A549 (cell line): ENCODE measurements at regions of chr4 and their contacts with region 1.

Region 1: GRCh38 chr4:76504613-76505465 is 69.8 kb downstream of the SHROOM3 start:
- DNase-seq: peak; percentile 33 to 39
- ATAC-seq: peak in 1 of 2 experiments; percentile 69; a peak in 3 of 6 replicates
- H3K4me3 ChIP-seq: no peak overlapping the region
- H3K27ac ChIP-seq: no peak overlapping the region
- H3K4me1 ChIP-seq: no peaks in the 10 kb centered on the region
- CTCF ChIP-seq: peak; percentile 62
- EP300 ChIP-seq: no peak
- POLR2A ChIP-seq: no peak
- RAD21 ChIP-seq: peak; percentile 61 to 66

Region 2: DNA sequence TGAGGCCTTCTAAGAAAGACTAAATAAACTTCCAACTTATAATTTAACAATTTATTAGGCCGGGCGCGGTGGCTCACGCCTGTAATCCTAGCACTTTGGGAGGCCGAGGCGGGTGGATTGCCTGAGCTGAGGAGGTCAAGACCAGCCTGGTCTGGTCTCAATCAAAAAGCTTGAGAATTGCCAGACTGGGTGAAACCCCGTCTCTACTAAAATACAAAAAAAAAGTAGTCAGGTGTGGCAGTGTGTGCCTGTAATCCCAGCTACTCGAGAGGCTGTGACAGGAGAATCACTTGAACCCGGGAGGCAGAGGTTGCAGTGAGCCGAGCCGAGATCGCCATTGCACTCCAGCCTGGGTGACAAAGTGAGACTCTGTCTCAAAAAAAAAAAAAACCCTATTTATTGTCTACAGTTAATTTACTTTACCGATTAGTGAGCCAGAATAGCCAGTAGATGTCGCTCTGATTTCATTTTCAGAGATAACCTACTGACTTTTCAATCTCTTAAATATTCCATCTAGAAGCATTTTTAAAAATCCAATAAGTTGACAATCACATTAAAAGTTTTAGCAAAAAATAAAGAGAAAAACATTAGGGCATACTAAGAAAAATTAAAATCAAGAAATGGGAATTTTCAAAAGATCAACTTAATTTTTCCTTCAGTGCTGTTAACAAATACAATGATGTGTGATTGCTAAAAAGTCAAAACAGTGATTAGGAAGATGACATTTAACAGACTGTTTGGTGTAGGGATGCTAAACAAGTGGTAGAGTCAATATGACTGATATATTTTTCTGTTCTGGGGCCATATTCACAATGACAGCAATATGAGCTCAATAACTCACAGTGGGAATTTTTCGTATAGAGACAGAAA is 74.1 kb before region 1 on chr4:
- CTCF ChIA-PET with region 1: interaction called, 76 read pairs
- POLR2A ChIA-PET with region 1: no interaction called
- DNase-seq: peak; percentile 33 to 36
- ATAC-seq: peak in 1 of 2 experiments; percentile 65; a peak in 3 of 6 replicates
- H3K4me3 ChIP-seq: no peak overlapping the region
- H3K27ac ChIP-seq: no peak overlapping the region
- H3K4me1 ChIP-seq: no peaks in the 10 kb centered on the region
- CTCF ChIP-seq: peak; percentile 72
- EP300 ChIP-seq: no peak
- POLR2A ChIP-seq: no peak
- RAD21 ChIP-seq: peak; percentile 74 to 77

Region 3: GRCh38 chr4:76476606-76477005 is 28.2 kb before region 1 on chr4:
- CTCF ChIA-PET with region 1: interaction called, 12 read pairs
- POLR2A ChIA-PET with region 1: no interaction called
- DNase-seq: no peak
- ATAC-seq: no peak
- H3K4me3 ChIP-seq: no peak overlapping the region
- H3K27ac ChIP-seq: no peak overlapping the region
- H3K4me1 ChIP-seq: no peaks in the 10 kb centered on the region
- CTCF ChIP-seq: no peak
- EP300 ChIP-seq: no peak
- POLR2A ChIP-seq: no peak
- RAD21 ChIP-seq: no peak

Region 4: GRCh38 chr4:77172336-77172735 is 667.5 kb after region 1 on chr4:
- CTCF ChIA-PET with region 1: no interaction called
- POLR2A ChIA-PET with region 1: no interaction called
- DNase-seq: no peak
- ATAC-seq: no peak
- H3K4me3 ChIP-seq: no peak overlapping the region
- H3K27ac ChIP-seq: no peak overlapping the region
- H3K4me1 ChIP-seq: no peaks in the 10 kb centered on the region
- CTCF ChIP-seq: no peak
- EP300 ChIP-seq: no peak
- POLR2A ChIP-seq: no peak
- RAD21 ChIP-seq: no peak